Activated CD4-positive, alpha-beta T cell treated with anti-CD3 and anti-CD28 coated beads for 36 hours (primary cell): ENCODE measurements at regions of chr6 and their contacts with region 1.

Region 1: GRCh38 chr6:159252955-159253508 is 83.8 kb downstream of the FNDC1 start:
- DNase-seq: peak; percentile 14
- ATAC-seq: peak; percentile 53
- H3K4me3 Mint-ChIP-seq: no peak overlapping the region
- H3K27ac Mint-ChIP-seq: no peak overlapping the region
- H3K4me1 Mint-ChIP-seq: no peaks in the 10 kb centered on the region
- H3K27me3 Mint-ChIP-seq: peaks cover 11% of the 10 kb centered on the region

Region 2: DNA sequence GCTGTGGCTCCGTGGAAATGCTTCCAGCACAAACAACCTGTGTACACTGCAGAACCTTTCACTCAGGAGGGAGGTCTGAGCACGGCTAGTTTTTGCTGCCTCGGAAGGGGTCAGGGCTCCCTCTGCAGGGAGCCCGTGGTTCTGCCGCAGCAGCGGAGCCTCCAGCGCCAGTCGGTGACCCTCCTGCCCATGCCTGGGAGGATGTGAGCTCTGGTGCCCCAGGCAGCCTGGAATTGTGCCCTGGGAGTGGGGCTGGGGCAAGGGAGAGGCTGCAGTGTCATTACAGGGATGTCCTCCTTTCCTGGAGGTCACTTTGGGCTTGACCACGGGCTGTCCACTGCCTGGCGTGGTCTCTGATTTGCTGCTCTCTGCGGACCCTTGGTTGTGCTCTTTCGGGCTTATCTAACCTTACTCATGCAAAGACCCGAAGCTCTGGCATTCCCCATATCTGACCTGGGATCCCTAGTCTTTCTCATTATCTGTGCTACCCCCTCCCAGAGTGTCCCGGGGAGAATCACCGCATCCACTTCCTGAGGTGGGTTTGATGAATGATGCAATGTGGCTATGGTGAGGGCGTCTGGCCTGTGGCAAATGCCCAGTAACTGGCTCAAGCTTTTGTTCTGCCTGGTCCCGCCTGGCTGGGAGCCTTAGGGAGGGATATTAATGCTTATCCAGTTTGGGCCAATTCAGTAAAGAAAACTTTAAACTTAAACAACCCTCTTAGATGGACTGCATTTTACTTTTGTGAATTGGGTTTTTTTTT is 148.7 kb before region 1 on chr6:
- CTCF ChIA-PET with region 1: no interaction called
- POLR2A ChIA-PET with region 1: no interaction called
- intact Hi-C with region 1: no loop called
- DNase-seq: peak; percentile 89
- ATAC-seq: peak; percentile 72
- H3K4me3 Mint-ChIP-seq: peak overlapping the region; percentile 10
- H3K27ac Mint-ChIP-seq: peak overlapping the region; percentile 87
- H3K4me1 Mint-ChIP-seq: peaks cover 79% of the 10 kb centered on the region
- H3K27me3 Mint-ChIP-seq: no peaks in the 10 kb centered on the region

Region 3: GRCh38 chr6:159233365-159234101 is 19.5 kb before region 1 on chr6:
- CTCF ChIA-PET with region 1: interaction called, 13 read pairs
- POLR2A ChIA-PET with region 1: no interaction called
- intact Hi-C with region 1: no loop called
- DNase-seq: no peak
- ATAC-seq: no peak
- H3K4me3 Mint-ChIP-seq: no peak overlapping the region
- H3K27ac Mint-ChIP-seq: no peak overlapping the region
- H3K4me1 Mint-ChIP-seq: peaks cover 2% of the 10 kb centered on the region
- H3K27me3 Mint-ChIP-seq: peaks cover 32% of the 10 kb centered on the region

Region 4: GRCh38 chr6:159359581-159360297 is 106.7 kb after region 1 on chr6:
- CTCF ChIA-PET with region 1: no interaction called
- POLR2A ChIA-PET with region 1: no interaction called
- intact Hi-C with region 1: no loop called
- DNase-seq: no peak
- ATAC-seq: no peak
- H3K4me3 Mint-ChIP-seq: no peak overlapping the region
- H3K27ac Mint-ChIP-seq: no peak overlapping the region
- H3K4me1 Mint-ChIP-seq: no peaks in the 10 kb centered on the region
- H3K27me3 Mint-ChIP-seq: peaks cover 15% of the 10 kb centered on the region

Region 5: DNA sequence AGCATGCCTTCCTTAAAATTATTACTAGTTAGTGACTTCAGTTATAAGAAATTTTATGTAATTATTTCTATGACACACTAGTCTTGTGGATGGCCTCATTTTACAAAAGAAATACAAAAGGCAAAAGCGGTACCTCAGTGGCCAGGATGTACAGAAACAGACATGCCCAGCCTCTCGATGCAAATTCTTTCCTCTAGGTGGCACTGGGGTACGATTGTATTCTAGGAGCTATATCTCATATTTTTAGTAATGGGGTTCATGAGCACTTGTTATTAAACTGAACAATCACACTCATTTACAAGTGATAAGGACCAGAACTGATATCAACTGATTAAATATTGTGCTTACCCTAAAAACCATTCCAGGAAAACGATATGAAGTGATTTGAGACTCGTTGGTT is 380.2 kb after region 1 on chr6:
- CTCF ChIA-PET with region 1: no interaction called
- POLR2A ChIA-PET with region 1: no interaction called
- intact Hi-C with region 1: loop called in 1 of 2 experiments (anchors 10 kb)
- DNase-seq: peak; percentile 11
- ATAC-seq: no peak
- H3K4me3 Mint-ChIP-seq: no peak overlapping the region
- H3K27ac Mint-ChIP-seq: no peak overlapping the region
- H3K4me1 Mint-ChIP-seq: no peaks in the 10 kb centered on the region
- H3K27me3 Mint-ChIP-seq: no peaks in the 10 kb centered on the region